Caco-2 (cell line): ENCODE measurements at regions of chr10 and their contacts with region 1.

Region 1: DNA sequence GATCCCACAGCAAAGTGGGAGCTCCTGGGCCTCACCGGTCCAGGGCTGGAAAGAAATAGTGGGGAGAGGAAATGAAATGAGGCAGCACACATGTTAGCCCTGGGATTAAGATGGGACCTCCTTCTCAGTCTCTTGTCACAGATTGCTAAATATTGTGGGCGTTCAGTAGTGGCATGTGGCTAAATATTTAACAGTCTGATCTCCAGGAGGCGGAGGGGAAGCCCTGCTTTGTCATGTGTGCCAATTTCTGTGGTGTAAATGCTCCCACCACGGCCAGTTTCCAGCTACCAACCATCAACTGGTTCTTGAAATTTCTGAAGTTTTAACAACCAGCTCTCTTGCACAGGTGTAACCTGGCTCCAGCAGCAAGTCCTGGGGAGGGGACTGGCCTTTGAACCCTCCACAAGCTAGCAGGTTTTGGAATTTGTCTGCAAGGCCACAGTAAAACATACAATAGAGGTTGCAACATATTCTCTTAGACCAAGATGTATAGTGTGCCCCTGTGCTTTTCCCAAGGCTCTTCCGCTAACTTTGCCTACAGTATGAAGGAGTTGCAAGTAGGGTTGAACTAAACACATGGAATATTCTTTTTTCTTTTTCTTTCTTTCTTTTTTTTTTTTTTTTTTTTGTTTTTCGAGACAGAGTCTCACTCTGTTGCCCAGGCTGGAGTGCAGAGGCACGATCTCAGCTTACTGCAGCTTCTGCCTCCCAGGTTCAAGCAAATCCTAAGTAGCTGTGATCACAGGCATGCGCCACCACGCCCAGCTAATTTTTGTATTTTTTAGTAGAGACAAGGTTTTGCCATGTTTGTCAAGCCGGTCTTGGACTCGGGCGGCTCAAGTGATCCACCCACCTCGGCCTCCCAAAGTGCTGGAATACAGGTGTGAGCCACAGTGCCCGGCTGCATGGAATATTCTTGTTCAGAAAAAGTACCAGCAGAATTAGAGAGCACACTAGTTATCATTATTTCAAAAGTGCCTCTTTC is 103.1 kb upstream of the PCBD1 start:
- DNase-seq: peak; percentile 61 to 73
- H3K4me3 ChIP-seq: no peak overlapping the region
- H3K4me3 Mint-ChIP-seq: no peak overlapping the region
- H3K27ac Mint-ChIP-seq: no peak overlapping the region
- H3K4me1 ChIP-seq: peaks cover 35% of the 10 kb centered on the region
- H3K4me1 Mint-ChIP-seq: peaks cover 14% of the 10 kb centered on the region
- H3K27me3 ChIP-seq: no peaks in the 10 kb centered on the region
- H3K27me3 Mint-ChIP-seq: no peaks in the 10 kb centered on the region
- CTCF ChIP-seq: no peak

Region 2: DNA sequence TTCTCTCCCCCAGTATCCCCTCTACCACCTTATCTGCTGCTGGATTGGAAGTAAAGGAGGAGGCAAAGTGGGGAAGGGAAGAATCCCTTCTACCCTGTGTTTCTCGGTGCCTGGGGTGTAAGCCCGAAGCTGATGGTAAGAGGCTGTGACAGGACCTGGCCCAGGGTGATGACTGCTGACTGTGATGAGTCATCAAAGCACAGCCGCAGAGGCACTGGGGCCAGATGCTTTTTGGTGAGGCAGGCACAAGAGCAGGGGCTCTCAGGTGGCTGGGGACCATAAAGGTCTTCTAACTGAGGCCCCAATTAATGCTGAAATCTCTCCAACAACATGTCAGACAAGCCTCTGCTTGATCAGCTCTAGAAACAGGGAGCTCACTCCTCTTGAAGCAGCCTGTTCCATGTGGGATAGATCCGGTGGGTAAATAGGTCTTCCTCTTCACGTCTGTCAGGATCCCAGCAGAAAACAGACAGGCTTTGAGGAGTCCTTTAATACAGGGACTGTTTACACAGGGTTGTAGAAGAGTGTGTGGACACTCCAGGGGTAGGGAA is 17.0 kb before region 1 on chr10:
- CTCF ChIA-PET with region 1: interaction called, 10 read pairs
- POLR2A ChIA-PET with region 1: no interaction called
- intact Hi-C with region 1: no loop called
- DNase-seq: no peak
- H3K4me3 ChIP-seq: no peak overlapping the region
- H3K4me3 Mint-ChIP-seq: no peak overlapping the region
- H3K27ac Mint-ChIP-seq: no peak overlapping the region
- H3K4me1 ChIP-seq: peaks cover 7% of the 10 kb centered on the region; the same call in 1 of the 2 replicates
- H3K4me1 Mint-ChIP-seq: no peaks in the 10 kb centered on the region
- H3K27me3 ChIP-seq: no peaks in the 10 kb centered on the region
- H3K27me3 Mint-ChIP-seq: no peaks in the 10 kb centered on the region
- CTCF ChIP-seq: no peak